Transverse colon (tissue), 4 donors: ENCODE measurements at regions of chr17 and their contacts with region 1.

Region 1: DNA sequence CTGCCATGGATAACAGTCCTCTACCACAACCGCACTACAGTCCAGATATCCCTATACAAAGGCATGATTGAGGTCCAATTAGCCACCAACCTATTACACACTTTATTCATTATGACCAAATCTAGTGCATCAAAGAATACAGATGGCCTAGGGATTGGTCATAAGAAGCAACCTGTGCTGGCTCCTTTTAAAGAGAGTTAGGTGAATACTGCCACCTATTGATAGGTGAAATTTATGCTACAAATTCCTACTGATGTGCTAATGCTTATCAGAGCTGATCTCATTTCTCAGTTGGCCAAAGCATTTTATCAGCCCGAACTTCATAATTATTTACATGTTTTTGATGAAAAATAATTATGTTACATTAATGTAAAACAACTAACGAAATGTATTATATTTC is 166.2 kb downstream of the ANKFN1 start:
- DNase-seq: no peak
- H3K4me3 ChIP-seq: no peak overlapping the region
- H3K27ac ChIP-seq: no peak overlapping the region
- H3K4me1 ChIP-seq: no peaks in the 10 kb centered on the region
- H3K27me3 ChIP-seq: no peaks in the 10 kb centered on the region
- CTCF ChIP-seq: peak in 4 of 5 experiments; percentile 37 to 50 (median 44)
- EP300 ChIP-seq: no peak
- POLR2A ChIP-seq: no peak

Region 2: GRCh38 chr17:55845385-55845784 is 474.1 kb before region 1 on chr17:
- in situ Hi-C with region 1: loop called in 3 of 4 experiments (anchors 25 kb)
- intact Hi-C with region 1: no loop called
- DNase-seq: peak; percentile 33
- H3K4me3 ChIP-seq: peak overlapping the region in 1 of 4 donors; percentile 18
- H3K27ac ChIP-seq: no peak overlapping the region
- H3K4me1 ChIP-seq: peaks cover 0 to 7% (median 3%) of the 10 kb centered on the region in 4 donors
- H3K27me3 ChIP-seq: no peaks in the 10 kb centered on the region
- CTCF ChIP-seq: peak; percentile 41 to 57 (median 51)
- EP300 ChIP-seq: no peak
- POLR2A ChIP-seq: no peak

Region 3: DNA sequence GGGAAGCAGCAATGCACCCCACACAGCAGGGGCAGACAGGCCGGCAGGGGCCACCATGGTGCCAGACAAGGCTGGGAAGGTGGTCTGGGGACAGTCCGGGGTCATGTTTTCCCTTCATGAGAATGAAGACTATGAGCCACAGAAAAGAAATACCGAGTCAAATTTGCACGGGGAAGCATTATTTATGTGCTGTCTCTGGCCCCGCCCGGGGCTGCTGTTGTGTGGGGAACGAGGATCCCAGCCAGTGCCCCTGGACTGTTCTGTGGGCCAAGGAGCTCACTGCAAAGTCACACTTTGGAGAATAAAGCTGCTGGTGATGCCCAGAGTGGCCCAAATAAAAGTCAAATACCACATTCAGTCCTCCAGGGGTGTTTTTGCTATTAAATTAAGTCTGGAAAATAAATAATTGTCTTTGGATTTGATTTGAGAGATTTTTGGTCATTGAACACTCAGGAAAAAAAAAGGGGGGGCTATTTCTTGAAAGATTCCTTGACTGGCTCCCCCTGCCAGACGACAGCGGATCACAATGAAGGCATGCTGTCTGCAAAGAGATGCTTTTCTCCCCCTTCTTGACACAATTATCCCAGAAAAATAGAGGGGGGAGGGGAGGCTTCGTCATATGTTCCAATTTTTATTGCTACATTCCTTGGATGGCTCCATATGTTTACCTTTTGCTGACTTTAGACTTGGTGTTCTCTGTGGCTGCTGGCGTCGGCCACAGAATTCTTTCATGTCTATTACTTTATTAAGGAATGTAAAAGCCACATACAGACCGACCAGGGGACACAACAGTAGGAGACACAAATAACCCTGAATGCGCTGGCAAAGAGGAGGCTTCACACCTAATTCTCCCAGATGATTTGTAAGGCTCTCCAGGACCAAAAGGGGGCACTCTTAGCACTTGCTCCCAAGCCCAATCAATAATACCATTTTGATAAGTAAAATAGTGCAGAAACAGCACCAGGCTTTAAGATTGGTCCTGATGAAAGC is 193.4 kb before region 1 on chr17:
- in situ Hi-C with region 1: no loop called
- intact Hi-C with region 1: loop called (anchors 10 kb)
- DNase-seq: no peak
- H3K4me3 ChIP-seq: no peak overlapping the region
- H3K27ac ChIP-seq: no peak overlapping the region
- H3K4me1 ChIP-seq: no peaks in the 10 kb centered on the region
- H3K27me3 ChIP-seq: no peaks in the 10 kb centered on the region
- CTCF ChIP-seq: peak in 4 of 5 experiments; percentile 14 to 24 (median 20)
- EP300 ChIP-seq: no peak
- POLR2A ChIP-seq: no peak

Region 4: GRCh38 chr17:56431736-56432135 is 112.2 kb after region 1 on chr17:
- in situ Hi-C with region 1: no loop called
- intact Hi-C with region 1: no loop called
- DNase-seq: no peak
- H3K4me3 ChIP-seq: no peak overlapping the region
- H3K27ac ChIP-seq: no peak overlapping the region
- H3K4me1 ChIP-seq: no peaks in the 10 kb centered on the region
- H3K27me3 ChIP-seq: no peaks in the 10 kb centered on the region
- CTCF ChIP-seq: no peak
- EP300 ChIP-seq: no peak
- POLR2A ChIP-seq: no peak